ENCODE measurements at regions of chr12 and their contacts with region 1.

Region 1: DNA sequence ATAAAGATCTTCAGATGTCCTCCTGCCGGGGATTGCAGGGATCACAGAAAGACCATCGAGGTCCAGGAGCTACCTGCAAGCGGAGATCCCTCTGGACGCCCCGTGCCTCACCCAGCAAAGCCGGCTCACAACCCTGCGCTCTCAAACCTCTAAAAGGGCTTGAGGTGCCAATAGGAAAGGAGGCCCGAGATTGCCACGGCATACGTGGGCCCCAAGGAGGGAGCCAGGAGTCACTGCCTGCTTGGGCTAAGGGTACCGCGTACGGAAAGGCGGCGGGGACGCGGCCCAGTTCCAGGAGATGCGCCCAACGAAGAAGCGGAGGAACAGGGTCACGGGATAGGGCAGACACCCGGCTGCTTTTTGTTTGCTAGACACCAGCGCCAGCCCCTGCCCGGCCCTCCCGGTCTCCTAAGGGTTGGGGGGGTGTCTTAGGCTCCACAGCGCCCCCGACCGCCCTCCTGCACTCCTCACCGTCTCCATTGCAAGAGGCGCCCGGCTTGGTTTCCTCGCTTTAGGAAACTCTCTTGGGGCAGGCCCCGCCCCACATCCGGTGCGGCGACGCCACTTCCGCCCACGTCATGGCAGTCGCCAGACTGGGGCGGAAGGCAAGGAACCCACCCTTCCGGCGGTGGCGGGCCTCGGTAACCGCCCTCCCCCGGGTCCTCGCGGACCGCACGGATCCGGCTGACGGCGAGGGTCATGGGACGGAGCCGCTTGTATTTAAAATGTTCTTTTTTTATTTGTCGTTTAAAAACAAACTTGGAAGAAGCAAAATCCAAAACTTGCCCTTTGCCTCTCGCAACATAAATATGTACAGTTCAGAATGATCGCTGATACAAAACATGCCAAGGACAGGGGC is at the start of gene PRKAG1:
- DNase-seq: peak; percentile 93 to 98 (median 97)
- ATAC-seq: peak; percentile 94
- H3K4me3 ChIP-seq: peak within 1 kb of the TSS; percentile 78
- H3K4me3 Mint-ChIP-seq: peak within 1 kb of the TSS; percentile 79 to 98 (median 94)
- H3K27ac ChIP-seq: peak within 1 kb of the TSS; percentile 86
- H3K27ac Mint-ChIP-seq: peak within 1 kb of the TSS; percentile 96 to 100 (median 99)
- H3K4me1 ChIP-seq: peaks cover 16 to 19% of the 10 kb centered on the region in 2 donors
- H3K4me1 Mint-ChIP-seq: peaks cover 23 to 53% (median 45%) of the 10 kb centered on the region in 7 donors
- H3K27me3 ChIP-seq: no peaks in the 10 kb centered on the region
- H3K27me3 Mint-ChIP-seq: no peaks in the 10 kb centered on the region
- total RNA-seq, gene PRKAG1: 34.0 to 74.4 (median 50.6) TPM

Region 2: GRCh38 chr12:48814262-48815125 is 204.0 kb before region 1 on chr12:
- CTCF ChIA-PET with region 1: no interaction called
- POLR2A ChIA-PET with region 1: no interaction called
- intact Hi-C with region 1: loop called in 1 of 2 experiments (anchors 1 kb)
- DNase-seq: peak; percentile 18 to 93 (median 47)
- ATAC-seq: peak; percentile 86
- H3K4me3 ChIP-seq: peak overlapping the region; percentile 59
- H3K4me3 Mint-ChIP-seq: peak overlapping the region; percentile 58 to 95 (median 91)
- H3K27ac ChIP-seq: no peak overlapping the region
- H3K27ac Mint-ChIP-seq: peak overlapping the region in 4 of 9 donors; percentile 32 to 85 (median 66)
- H3K4me1 ChIP-seq: peaks cover 7 to 19% of the 10 kb centered on the region in 2 donors
- H3K4me1 Mint-ChIP-seq: peaks cover 18 to 39% (median 33%) of the 10 kb centered on the region in 7 donors
- H3K27me3 ChIP-seq: no peaks in the 10 kb centered on the region
- H3K27me3 Mint-ChIP-seq: peaks cover 0 to 23% (median 5%) of the 10 kb centered on the region in 5 donors

Region 3: GRCh38 chr12:48924617-48925303 is 93.7 kb before region 1 on chr12:
- CTCF ChIA-PET with region 1: no interaction called
- POLR2A ChIA-PET with region 1: no interaction called
- intact Hi-C with region 1: loop called in 1 of 2 experiments (anchors 1 kb)
- DNase-seq: peak; percentile 56 to 80 (median 77)
- ATAC-seq: peak; percentile 86
- H3K4me3 ChIP-seq: peak overlapping the region; percentile 72
- H3K4me3 Mint-ChIP-seq: peak overlapping the region; percentile 89 to 98 (median 93)
- H3K27ac ChIP-seq: peak overlapping the region; percentile 99
- H3K27ac Mint-ChIP-seq: peak overlapping the region; percentile 74 to 98 (median 95)
- H3K4me1 ChIP-seq: peaks cover 10 to 18% of the 10 kb centered on the region in 2 donors
- H3K4me1 Mint-ChIP-seq: peaks cover 18 to 52% (median 42%) of the 10 kb centered on the region in 7 donors
- H3K27me3 ChIP-seq: no peaks in the 10 kb centered on the region
- H3K27me3 Mint-ChIP-seq: no peaks in the 10 kb centered on the region

Region 4: DNA sequence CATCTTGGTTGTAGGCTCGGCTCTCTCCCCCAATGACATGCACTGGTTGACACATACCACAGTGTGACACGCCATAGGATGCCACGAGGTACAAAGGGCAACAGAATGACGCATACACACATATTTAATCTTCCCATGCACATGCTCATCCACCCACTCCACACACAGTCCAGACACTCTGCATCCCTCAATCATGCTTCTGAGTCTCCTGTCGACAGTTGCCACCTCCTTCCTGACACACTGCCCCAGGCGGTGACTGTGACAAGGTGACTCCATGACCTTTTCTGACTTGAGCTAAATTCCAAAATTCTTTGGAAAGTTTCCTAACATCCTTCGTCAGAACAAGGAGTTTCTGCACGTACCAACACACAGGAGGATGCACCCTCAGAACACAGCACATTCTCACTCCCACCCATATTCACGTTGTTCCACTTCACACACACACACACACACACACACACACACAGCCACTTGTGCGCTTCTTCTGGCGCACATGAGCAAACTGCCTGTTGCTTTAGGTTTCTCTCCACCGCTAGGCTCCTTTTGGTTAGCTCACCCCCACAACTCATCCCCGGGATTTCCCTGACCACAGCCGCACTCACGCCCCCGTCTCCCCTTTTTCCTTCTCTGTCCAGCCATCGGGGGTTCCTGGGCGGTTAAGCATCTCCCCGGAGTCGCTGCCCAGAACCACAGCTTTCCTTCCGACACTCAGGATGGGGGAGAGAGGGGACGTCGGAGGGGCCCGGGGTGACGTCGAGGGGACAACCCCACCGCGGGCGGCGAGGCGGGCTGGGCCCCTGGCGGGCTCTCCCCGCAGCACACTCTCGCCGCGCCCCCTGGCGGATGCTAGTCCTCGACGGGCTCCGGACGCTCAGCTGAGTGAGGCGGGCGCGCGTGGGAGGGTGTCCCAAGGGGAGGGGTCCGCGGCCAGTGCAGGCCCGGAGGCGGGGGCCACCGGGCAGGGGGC is 40.9 kb before region 1 on chr12:
- CTCF ChIA-PET with region 1: no interaction called
- POLR2A ChIA-PET with region 1: no interaction called
- intact Hi-C with region 1: loop called in 1 of 2 experiments (anchors 1 kb)
- DNase-seq: peak; percentile 52 to 90 (median 75)
- ATAC-seq: peak; percentile 77
- H3K4me3 ChIP-seq: no peak overlapping the region
- H3K4me3 Mint-ChIP-seq: peak overlapping the region; percentile 24 to 85 (median 56)
- H3K27ac ChIP-seq: no peak overlapping the region
- H3K27ac Mint-ChIP-seq: peak overlapping the region in 7 of 9 donors; percentile 26 to 81 (median 61)
- H3K4me1 ChIP-seq: peaks cover 37% of the 10 kb centered on the region in 2 donors
- H3K4me1 Mint-ChIP-seq: peaks cover 28 to 53% (median 47%) of the 10 kb centered on the region in 7 donors
- H3K27me3 ChIP-seq: peaks cover 3 to 11% of the 10 kb centered on the region in 2 donors
- H3K27me3 Mint-ChIP-seq: peaks cover 18 to 92% (median 40%) of the 10 kb centered on the region in 5 donors

Region 5: DNA sequence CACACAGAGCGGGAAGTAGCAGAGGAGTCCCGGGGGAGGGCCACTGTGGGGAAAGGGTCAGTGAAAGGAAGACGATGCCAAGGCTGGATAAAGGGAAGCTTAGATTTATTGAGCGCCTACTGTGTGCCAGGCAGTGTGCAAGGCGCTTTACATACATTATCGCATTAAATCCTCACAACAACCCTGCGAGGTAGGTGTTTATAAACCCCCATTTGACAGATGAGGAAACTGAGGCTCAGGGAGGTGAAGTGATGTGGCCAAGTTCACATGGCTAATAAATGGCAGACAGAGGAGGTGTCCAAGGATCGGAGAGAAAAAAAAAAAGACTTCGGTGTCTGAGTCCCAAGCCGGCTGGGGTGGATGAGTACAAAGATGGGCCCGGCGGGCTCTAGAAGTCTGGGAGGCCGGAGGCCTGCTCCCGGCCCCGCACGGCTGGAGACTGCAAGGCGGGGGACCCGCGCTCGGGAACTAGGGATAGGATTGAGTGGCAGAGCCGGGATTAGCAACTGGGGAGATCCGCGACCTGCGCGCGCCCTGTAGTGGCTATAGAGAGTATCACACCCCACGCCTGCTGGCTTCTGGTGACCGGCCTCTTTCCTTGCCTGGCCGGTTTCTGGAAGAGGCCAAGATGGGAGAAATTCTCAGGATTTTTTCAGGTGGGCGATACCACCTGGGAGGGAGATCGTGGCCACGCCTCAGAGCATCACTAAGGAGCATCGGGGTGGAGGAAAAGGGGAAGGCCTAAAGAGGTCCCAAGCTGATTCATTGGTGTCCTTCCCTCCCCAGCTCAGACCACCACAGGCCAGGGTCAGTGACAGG is 23.2 kb before region 1 on chr12:
- CTCF ChIA-PET with region 1: interaction called, 3 read pairs
- POLR2A ChIA-PET with region 1: interaction called, 5 read pairs
- intact Hi-C with region 1: loop called (anchors 1 kb)
- DNase-seq: peak in 3 of 9 donors; percentile 36 to 56 (median 54)
- ATAC-seq: peak; percentile 51
- H3K4me3 ChIP-seq: no peak overlapping the region
- H3K4me3 Mint-ChIP-seq: peak overlapping the region in 9 of 10 donors; percentile 15 to 81 (median 71)
- H3K27ac ChIP-seq: no peak overlapping the region
- H3K27ac Mint-ChIP-seq: peak overlapping the region in 2 of 9 donors; percentile 31 to 90
- H3K4me1 ChIP-seq: peaks cover 13 to 26% of the 10 kb centered on the region in 2 donors
- H3K4me1 Mint-ChIP-seq: peaks cover 24 to 39% (median 32%) of the 10 kb centered on the region in 7 donors
- H3K27me3 ChIP-seq: peaks cover 0 to 25% of the 10 kb centered on the region in 2 donors
- H3K27me3 Mint-ChIP-seq: peaks cover 48 to 75% (median 56%) of the 10 kb centered on the region in 5 donors

Region 6: DNA sequence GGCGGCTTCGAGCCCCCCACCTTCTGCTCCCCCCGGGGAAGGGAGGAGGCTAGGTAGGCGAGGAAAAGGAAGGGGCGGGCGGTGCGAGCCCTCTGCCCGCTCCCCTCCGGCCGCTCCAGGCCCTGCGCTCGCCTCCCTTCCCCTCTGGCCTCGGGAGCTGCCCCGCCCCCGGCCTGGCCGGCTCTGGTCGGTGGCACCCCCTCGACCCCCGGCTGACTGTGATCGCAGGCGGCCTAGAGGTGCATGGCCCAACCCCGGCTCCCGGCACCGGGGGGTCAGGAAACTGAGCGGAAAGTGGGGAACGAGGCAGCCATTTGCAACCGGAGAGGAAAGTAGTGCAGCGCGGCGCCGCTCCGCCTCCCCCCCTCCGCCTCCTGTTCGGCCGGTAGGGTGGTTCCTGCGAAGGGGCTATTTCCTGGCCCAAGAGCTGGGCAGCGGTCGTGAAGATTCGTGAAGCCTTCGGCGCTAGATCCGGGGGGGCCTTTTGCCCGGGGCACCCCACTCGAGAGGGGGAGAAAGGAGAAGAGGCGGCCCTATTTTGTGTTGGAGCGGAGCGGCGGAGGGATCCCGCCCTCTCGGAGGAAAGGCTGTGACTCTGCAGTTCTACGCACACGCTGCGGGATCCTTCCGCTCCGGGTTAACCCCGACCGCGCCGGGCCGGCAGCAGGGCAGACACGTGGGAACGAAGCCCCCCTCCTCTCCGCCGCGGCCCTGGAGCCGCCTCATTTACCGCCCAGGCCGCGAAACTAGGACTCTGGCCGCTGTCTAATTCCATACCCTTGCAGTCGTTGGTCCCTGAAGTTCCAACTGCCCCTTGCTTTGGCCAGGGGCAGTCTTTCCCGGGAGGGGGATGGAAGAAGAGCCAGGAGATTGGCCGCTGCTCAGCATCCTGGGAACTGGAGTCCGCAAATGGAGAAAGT is 42.0 kb after region 1 on chr12 and contains the start of gene KMT2D:
- CTCF ChIA-PET with region 1: interaction called, 3 read pairs
- POLR2A ChIA-PET with region 1: interaction called, 4 read pairs
- intact Hi-C with region 1: loop called (anchors 1 kb)
- DNase-seq: peak; percentile 80 to 94 (median 91)
- ATAC-seq: peak; percentile 86
- H3K4me3 ChIP-seq: peak within 1 kb of the TSS; percentile 87
- H3K4me3 Mint-ChIP-seq: peak within 1 kb of the TSS; percentile 91 to 98 (median 95)
- H3K27ac ChIP-seq: peak within 1 kb of the TSS; percentile 87
- H3K27ac Mint-ChIP-seq: peak within 1 kb of the TSS; percentile 90 to 99 (median 97)
- H3K4me1 ChIP-seq: peaks cover 38 to 40% of the 10 kb centered on the region in 2 donors
- H3K4me1 Mint-ChIP-seq: peaks cover 44 to 55% (median 51%) of the 10 kb centered on the region in 7 donors
- H3K27me3 ChIP-seq: no peaks in the 10 kb centered on the region
- H3K27me3 Mint-ChIP-seq: no peaks in the 10 kb centered on the region
- total RNA-seq, gene KMT2D: 129 to 167 (median 151) TPM

Region 7: DNA sequence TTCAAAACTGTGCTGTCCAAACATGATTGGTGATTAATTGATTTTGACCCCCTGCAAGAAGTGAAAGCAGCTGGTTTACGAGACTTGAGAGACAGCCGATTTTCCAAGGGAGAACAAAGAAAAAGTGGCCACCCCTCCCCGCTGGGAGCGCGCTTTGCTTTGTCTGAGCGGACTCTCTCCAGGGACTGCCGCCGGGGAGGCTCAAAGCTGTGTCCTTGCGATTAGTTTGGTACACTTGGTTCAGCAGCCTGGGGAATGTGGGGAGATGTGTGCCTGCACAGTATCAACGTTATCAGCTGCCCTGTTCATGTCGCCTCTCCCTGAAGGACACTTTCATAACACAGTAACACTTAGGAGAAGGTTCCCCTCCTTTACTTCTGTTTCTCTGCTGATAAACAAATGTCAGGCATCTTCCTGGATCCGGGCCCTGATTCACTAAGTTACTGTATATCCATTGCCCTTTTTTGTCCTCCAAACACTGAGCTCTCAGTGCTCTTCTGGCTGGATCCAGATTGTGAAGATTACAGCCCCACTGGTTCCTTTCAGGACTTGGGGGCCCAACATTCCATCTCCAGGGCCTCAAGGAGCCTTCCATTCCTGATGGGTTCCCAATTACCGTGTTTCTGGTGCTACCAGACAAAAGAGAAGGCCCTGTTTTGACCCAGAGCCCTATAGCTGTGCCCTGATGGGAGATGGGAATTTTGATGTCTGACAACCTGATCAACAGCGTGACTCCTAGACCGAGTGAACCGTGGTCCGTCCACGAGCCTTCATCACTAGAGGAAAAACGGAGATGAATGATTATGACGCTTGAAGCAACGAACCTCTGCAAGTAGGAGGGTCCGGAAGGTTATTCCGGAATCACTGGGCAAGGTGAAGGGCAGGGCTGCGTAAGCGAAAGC is 214.7 kb after region 1 on chr12:
- CTCF ChIA-PET with region 1: no interaction called
- POLR2A ChIA-PET with region 1: no interaction called
- intact Hi-C with region 1: loop called in 1 of 2 experiments (anchors 1 kb)
- DNase-seq: peak in 1 of 9 donors; percentile 7
- ATAC-seq: no peak
- H3K4me3 ChIP-seq: no peak overlapping the region
- H3K4me3 Mint-ChIP-seq: peak overlapping the region; percentile 68 to 89 (median 85)
- H3K27ac ChIP-seq: no peak overlapping the region
- H3K27ac Mint-ChIP-seq: peak overlapping the region; percentile 65 to 93 (median 89)
- H3K4me1 ChIP-seq: peaks cover 0 to 7% of the 10 kb centered on the region in 2 donors
- H3K4me1 Mint-ChIP-seq: peaks cover 0 to 12% (median 9%) of the 10 kb centered on the region in 7 donors
- H3K27me3 ChIP-seq: no peaks in the 10 kb centered on the region
- H3K27me3 Mint-ChIP-seq: peaks cover 0 to 7% (median 0%) of the 10 kb centered on the region in 5 donors